Uterus (tissue), 4 donors: ENCODE measurements at regions of chr3 and their contacts with region 1.

Region 1: DNA sequence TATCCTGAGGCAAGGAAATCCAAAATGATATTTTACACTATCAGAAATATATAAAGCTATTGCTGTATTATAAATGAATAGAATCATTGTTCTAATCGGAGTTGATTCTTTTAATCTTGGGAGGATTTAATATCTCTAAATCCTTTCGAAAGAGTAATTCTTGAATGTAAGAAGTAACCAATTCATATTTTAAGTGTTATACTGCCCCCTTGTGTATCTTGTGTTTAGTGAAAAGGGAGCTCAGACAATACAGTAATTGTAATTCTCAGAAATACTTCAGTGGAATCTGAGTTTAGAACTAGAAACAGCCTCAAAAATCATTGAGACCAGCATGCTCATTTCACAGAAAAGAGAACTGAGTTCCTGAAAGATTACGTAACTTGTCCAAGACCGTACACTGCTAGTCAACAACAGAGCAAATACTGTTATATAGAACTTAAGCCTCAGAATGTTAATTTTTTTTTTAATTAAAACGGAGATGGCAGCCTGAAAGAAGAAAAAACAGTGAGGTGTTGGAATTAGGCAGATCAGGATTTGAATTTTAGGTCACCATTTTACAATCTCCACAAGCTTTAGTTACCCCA is 42.9 kb downstream of the PLCH1 start:
- DNase-seq: no peak
- H3K4me3 ChIP-seq: no peak overlapping the region
- H3K27ac ChIP-seq: no peak overlapping the region
- H3K4me1 ChIP-seq: no peaks in the 10 kb centered on the region
- H3K27me3 ChIP-seq: no peaks in the 10 kb centered on the region
- CTCF ChIP-seq: peak; percentile 47 to 71 (median 64)
- POLR2A ChIP-seq: no peak

Region 2: GRCh38 chr3:155352900-155353490 is 349.0 kb before region 1 on chr3:
- intact Hi-C with region 1: loop called (anchors 10 kb)
- DNase-seq: no peak
- H3K4me3 ChIP-seq: no peak overlapping the region
- H3K27ac ChIP-seq: no peak overlapping the region
- H3K4me1 ChIP-seq: no peaks in the 10 kb centered on the region
- H3K27me3 ChIP-seq: no peaks in the 10 kb centered on the region
- CTCF ChIP-seq: peak; percentile 27 to 55 (median 33)
- POLR2A ChIP-seq: no peak

Region 3: DNA sequence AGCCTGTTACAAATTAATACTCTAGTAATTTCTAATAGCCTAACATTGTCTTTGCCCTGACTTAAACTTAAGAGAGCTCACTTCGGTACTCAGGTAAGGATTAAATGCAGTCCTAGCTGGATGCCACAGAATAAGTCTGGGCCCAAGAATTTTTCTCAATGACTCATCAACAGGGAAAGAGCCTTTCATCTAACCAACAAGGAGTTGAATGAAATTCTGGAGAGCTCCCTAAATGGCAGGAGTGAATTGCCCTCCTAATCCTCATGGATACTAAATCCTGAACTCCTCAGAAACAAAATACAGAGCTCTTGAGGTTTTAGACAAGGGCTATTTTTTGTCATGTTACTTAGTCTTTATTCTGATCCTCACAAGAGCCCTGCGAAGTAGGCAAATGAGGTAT is 116.6 kb before region 1 on chr3:
- intact Hi-C with region 1: no loop called
- DNase-seq: no peak
- H3K4me3 ChIP-seq: no peak overlapping the region
- H3K27ac ChIP-seq: no peak overlapping the region
- H3K4me1 ChIP-seq: no peaks in the 10 kb centered on the region
- H3K27me3 ChIP-seq: no peaks in the 10 kb centered on the region
- CTCF ChIP-seq: no peak
- POLR2A ChIP-seq: no peak